ENCODE measurements at regions of chr10 and their contacts with region 1.

Region 1: DNA sequence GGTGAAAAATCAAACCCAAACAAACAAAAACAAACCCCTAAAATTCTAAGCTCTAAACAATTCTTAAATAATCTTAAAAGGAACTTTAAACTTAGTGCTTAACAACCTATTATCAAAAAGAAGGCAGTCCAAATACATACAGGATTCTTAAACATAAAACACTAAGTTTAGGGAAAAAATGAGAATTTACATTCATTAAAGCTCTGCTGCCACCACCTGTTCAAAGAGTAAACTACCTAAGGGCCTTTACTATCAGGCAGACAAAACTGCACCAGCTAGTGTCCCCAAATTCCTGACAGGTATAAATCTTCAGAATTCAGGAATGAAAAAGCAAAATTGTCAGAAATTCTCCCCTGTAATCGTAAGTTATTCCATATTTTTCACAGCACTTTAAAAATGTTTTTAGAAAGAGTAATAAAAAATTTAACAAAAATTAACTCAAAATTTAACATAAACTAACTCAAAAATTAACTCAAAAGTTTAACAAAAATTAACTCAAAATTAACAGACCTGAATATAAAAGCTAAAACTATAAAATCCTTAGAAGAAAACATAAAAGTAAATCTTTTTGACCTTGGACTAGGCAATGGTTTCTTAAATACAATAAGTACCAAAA is 55.1 kb downstream of the PDZD8 start:
- DNase-seq: no peak
- ATAC-seq: peak; percentile 69
- H3K4me3 Mint-ChIP-seq: no peak overlapping the region
- H3K27ac Mint-ChIP-seq: no peak overlapping the region
- H3K4me1 Mint-ChIP-seq: peaks cover 34% of the 10 kb centered on the region
- H3K27me3 Mint-ChIP-seq: no peaks in the 10 kb centered on the region
- CTCF ChIP-seq: 0 out of 2 replicates have a peak, but pooled peaks have one; percentile 29

Region 2: GRCh38 chr10:117226824-117227451 is 93.2 kb before region 1 on chr10:
- CTCF ChIA-PET with region 1: interaction called, 46 read pairs
- POLR2A ChIA-PET with region 1: interaction called, 4 read pairs
- DNase-seq: peak; percentile 68
- ATAC-seq: peak; percentile 97
- H3K4me3 Mint-ChIP-seq: no peak overlapping the region
- H3K27ac Mint-ChIP-seq: no peak overlapping the region
- H3K4me1 Mint-ChIP-seq: peaks cover 14% of the 10 kb centered on the region
- H3K27me3 Mint-ChIP-seq: peaks cover 8% of the 10 kb centered on the region; the same call in 1 of the 2 replicates
- CTCF ChIP-seq: no peak

Region 3: GRCh38 chr10:117249493-117250093 is 70.6 kb before region 1 on chr10:
- CTCF ChIA-PET with region 1: interaction called, 10 read pairs
- POLR2A ChIA-PET with region 1: no interaction called
- DNase-seq: no peak
- ATAC-seq: no peak
- H3K4me3 Mint-ChIP-seq: no peak overlapping the region
- H3K27ac Mint-ChIP-seq: no peak overlapping the region
- H3K4me1 Mint-ChIP-seq: peaks cover 28% of the 10 kb centered on the region
- H3K27me3 Mint-ChIP-seq: no peaks in the 10 kb centered on the region
- CTCF ChIP-seq: no peak

Region 4: DNA sequence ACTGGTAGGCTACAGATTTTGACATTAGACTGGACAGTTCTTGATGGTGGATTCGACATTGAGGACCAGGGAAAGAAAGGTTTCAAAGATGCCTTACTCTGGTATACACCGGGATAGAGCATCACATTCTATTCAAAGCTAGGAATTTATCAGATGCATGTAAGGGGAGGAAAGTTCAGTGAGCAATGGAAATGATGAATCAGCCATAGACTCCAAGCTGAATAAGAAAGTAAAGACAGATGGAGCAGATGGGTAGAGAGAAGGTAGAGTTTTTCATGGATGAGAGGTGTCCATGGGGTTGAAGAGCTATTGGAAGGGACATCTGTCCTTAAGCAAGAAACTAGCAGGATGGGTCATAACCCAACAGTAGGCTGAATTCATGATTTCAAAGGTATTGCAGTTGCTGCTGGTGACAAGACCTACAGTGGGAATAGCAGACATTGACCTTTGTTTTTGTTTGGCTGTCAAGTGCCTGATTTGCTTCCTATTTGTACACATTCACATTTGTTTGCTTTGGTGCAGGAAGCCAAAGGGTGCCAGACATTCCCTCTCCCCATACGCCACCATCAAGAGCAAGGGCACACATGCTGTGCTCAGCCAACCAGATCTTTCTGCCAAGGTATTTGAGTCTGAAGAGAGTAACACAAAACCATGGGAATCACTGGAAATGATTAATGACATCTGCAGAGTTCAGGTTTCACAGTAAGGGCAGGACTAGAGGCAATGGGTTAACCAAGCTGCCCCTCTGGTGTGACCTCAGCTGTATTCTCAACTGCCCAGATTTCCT is 1443.2 kb after region 1 on chr10:
- CTCF ChIA-PET with region 1: no interaction called
- POLR2A ChIA-PET with region 1: no interaction called
- DNase-seq: no peak
- ATAC-seq: no peak
- H3K4me3 Mint-ChIP-seq: no peak overlapping the region
- H3K27ac Mint-ChIP-seq: no peak overlapping the region
- H3K4me1 Mint-ChIP-seq: no peaks in the 10 kb centered on the region
- H3K27me3 Mint-ChIP-seq: no peaks in the 10 kb centered on the region; the same call in none of the 2 replicates
- CTCF ChIP-seq: no peak